ENCODE measurements at regions of chr16 and their contacts with region 1.

Region 1: GRCh38 chr16:56608043-56608875 is at the start of gene MT2A:
- DNase-seq: peak; percentile 88
- H3K4me3 Mint-ChIP-seq: peak within 1 kb of the TSS; percentile 97
- H3K27ac Mint-ChIP-seq: peak within 1 kb of the TSS; percentile 99
- H3K4me1 Mint-ChIP-seq: peaks cover 55% of the 10 kb centered on the region
- H3K27me3 Mint-ChIP-seq: no peaks in the 10 kb centered on the region
- total RNA-seq, gene MT2A: 827 and 878 TPM in 2 replicates

Region 2: DNA sequence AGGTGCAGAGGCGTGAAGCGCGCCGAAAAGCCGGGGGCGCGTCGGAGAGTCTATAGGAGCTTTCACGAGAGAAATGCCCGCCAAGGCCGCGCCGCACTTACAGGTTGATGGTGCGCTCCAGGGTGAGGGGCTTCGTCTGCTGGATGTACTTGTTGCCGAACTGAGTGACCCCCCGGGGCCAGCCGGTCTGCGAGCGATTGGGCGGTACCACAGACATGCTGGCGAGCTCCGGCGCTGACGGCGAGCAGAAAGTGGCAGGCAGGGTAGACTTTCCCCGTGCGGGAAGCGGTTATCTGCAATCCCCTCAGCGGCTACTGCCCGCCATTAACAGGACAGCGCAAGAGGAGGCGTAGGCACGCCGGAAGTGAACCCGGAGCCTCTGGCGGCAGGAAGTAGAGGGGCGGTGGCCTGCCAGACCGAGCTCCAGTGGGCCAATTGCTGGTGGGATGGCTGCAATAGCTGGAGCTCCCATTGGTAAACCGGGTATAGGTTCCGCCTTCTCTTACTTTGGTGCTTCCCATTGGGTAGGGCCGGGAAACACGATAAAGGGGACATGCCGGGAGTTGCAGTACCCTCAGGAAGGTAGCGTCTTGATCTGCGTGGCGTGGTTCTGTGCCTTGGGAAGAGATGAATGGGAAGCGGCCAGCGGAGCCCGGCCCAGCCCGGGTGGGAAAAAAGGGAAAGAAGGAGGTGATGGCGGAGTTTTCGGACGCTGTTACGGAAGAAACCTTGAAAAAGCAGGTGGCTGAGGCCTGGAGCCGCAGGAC is 157.1 kb before region 1 on chr16 and contains the starts of genes NUDT21 and OGFOD1:
- intact Hi-C with region 1: loop called (anchors 1 kb)
- DNase-seq: peak; percentile 92
- H3K4me3 Mint-ChIP-seq: peak within 1 kb of the TSS; percentile 97
- H3K27ac Mint-ChIP-seq: peak within 1 kb of the TSS; percentile 95
- H3K4me1 Mint-ChIP-seq: peaks cover 53% of the 10 kb centered on the region
- H3K27me3 Mint-ChIP-seq: no peaks in the 10 kb centered on the region
- total RNA-seq, gene NUDT21: 307 and 313 TPM in 2 replicates
- total RNA-seq, gene OGFOD1: 78.0 and 79.7 TPM in 2 replicates

Region 3: DNA sequence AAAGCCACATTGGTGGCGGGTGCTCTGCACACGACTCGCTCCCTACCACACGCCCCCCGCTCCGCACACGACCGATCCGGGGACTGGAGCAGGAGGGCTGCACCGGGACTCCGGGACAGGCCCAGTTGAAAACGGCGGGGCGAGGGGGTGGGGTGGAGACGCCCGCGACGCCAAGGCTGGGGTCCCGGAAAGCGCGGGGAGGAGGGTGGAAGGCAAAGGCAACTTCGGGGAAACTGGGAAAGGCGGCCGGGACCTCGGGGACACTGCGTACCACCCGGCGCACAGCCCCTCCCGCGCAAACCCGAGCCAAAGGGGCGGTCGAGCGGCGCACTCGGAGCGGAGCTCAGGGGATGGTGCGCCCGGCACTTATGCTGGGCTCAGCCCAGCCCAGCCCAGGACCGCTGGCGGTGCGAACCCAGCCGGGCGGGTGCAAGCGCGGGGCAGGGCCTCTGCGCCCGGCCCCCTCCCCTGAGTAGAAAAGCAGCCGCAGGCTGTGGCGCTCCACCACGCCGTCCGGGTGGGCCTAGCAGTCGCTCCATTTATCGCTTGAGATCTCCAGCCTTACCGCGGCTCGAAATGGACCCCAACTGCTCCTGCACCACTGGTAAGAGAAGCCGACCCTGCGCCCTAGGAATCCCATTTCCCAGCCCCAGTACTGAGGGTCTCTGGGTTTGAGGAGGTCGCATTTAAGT is 24.0 kb after region 1 on chr16 and contains the start of gene MT1M:
- intact Hi-C with region 1: no loop called
- DNase-seq: no peak
- H3K4me3 Mint-ChIP-seq: peak within 1 kb of the TSS; percentile 62
- H3K27ac Mint-ChIP-seq: no peak within 1 kb of the TSS
- H3K4me1 Mint-ChIP-seq: peaks cover 23% of the 10 kb centered on the region
- H3K27me3 Mint-ChIP-seq: peaks cover 64% of the 10 kb centered on the region
- total RNA-seq, gene MT1M: not detected in 2 replicates

Region 4: DNA sequence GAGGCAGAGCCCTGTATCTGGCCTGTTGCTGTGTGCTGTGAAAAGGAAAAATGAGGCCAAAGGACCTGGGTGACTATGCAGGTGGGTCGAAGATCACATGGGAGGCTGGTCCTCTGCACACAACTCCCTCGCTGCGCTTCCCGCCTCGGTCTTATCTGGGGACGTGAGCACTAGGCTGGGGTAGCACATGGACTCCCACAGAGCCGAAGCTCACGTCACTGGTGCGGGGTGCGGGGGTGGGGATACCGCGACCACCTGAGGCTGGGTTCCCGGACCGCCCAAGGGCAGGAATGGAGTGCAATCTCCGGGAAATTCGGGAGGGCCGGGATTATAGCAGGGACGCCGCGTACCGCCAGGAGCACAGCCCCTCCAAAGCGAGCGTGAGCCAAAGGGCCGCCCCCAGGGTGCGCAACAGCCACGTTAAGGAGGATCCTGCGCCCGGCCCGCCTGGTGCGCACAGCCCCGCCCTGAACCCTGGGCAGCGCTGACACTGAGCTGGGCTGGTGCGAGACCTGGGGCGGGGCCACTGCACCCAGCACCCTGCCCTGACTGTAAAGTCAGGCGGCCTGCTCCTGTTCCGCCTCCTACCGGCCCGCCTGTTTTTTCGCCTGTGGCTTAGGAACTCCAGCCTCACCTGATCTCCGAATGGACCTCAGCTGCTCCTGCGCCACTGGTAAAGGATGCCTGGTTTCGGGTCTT is 35.0 kb after region 1 on chr16:
- intact Hi-C with region 1: loop called (anchors 1 kb)
- DNase-seq: peak; percentile 76
- H3K4me3 Mint-ChIP-seq: peak overlapping the region; percentile 70
- H3K27ac Mint-ChIP-seq: peak overlapping the region; percentile 60
- H3K4me1 Mint-ChIP-seq: peaks cover 23% of the 10 kb centered on the region
- H3K27me3 Mint-ChIP-seq: peaks cover 48% of the 10 kb centered on the region

Region 5: DNA sequence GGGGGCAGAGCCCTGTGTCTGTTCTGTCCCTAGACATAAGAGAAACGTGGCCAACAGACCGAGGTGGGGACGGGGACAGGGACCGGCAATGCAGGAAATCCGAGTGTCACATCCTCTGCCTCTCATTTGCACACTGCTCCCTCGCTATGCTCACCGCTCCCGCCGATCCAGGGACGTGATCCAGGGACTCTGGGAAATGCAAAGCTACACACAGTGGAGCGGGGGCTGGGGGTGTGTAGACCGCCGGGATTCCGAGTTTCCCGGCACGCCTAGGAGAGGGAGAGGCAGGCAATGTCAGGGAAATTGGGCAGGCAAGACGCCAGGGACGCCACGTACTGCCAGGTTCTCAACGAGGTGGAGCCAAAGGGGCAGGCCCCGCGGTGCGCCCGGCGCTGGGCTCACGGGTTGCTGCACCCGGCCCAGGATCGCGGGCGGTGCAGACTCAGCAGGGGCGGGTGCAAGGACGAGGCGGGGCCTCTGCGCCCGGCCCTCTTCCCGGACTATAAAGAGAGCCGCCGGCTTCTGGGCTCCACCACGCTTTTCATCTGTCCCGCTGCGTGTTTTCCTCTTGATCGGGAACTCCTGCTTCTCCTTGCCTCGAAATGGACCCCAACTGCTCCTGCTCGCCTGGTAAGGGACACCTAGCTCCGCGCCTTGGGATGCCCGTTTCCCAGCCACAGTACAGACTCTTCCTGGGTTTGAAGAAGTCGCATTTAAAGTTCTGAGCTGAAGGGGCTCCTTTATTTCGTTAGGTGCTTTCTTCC is 73.9 kb after region 1 on chr16 and contains the start of gene MT1X:
- intact Hi-C with region 1: loop called (anchors 1 kb)
- DNase-seq: peak; percentile 83
- H3K4me3 Mint-ChIP-seq: peak within 1 kb of the TSS; percentile 94
- H3K27ac Mint-ChIP-seq: peak within 1 kb of the TSS; percentile 84
- H3K4me1 Mint-ChIP-seq: peaks cover 24% of the 10 kb centered on the region
- H3K27me3 Mint-ChIP-seq: no peaks in the 10 kb centered on the region
- total RNA-seq, gene MT1X: 58.2 and 62.3 TPM in 2 replicates

Region 6: GRCh38 chr16:56944954-56945839 is 336.9 kb after region 1 on chr16:
- intact Hi-C with region 1: loop called (anchors 10 kb)
- DNase-seq: no peak
- H3K4me3 Mint-ChIP-seq: no peak overlapping the region
- H3K27ac Mint-ChIP-seq: peak overlapping the region; percentile 87
- H3K4me1 Mint-ChIP-seq: peaks cover 36% of the 10 kb centered on the region
- H3K27me3 Mint-ChIP-seq: no peaks in the 10 kb centered on the region

Region 7: GRCh38 chr16:57042157-57043111 is 434.2 kb after region 1 on chr16:
- intact Hi-C with region 1: loop called (anchors 2 kb)
- DNase-seq: peak; percentile 67
- H3K4me3 Mint-ChIP-seq: peak overlapping the region; percentile 62
- H3K27ac Mint-ChIP-seq: peak overlapping the region; percentile 94
- H3K4me1 Mint-ChIP-seq: peaks cover 60% of the 10 kb centered on the region
- H3K27me3 Mint-ChIP-seq: no peaks in the 10 kb centered on the region